ENCODE measurements at regions of chr12 and their contacts with region 1.

Region 1: GRCh38 chr12:12803186-12803585 is 10.0 kb upstream of the DDX47 start:
- DNase-seq: peak; percentile 81
- ATAC-seq: peak; percentile 87
- H3K4me3 Mint-ChIP-seq: peak overlapping the region; percentile 2
- H3K27ac Mint-ChIP-seq: peak overlapping the region; percentile 74
- H3K4me1 Mint-ChIP-seq: peaks cover 50% of the 10 kb centered on the region
- H3K27me3 Mint-ChIP-seq: no peaks in the 10 kb centered on the region

Region 2: DNA sequence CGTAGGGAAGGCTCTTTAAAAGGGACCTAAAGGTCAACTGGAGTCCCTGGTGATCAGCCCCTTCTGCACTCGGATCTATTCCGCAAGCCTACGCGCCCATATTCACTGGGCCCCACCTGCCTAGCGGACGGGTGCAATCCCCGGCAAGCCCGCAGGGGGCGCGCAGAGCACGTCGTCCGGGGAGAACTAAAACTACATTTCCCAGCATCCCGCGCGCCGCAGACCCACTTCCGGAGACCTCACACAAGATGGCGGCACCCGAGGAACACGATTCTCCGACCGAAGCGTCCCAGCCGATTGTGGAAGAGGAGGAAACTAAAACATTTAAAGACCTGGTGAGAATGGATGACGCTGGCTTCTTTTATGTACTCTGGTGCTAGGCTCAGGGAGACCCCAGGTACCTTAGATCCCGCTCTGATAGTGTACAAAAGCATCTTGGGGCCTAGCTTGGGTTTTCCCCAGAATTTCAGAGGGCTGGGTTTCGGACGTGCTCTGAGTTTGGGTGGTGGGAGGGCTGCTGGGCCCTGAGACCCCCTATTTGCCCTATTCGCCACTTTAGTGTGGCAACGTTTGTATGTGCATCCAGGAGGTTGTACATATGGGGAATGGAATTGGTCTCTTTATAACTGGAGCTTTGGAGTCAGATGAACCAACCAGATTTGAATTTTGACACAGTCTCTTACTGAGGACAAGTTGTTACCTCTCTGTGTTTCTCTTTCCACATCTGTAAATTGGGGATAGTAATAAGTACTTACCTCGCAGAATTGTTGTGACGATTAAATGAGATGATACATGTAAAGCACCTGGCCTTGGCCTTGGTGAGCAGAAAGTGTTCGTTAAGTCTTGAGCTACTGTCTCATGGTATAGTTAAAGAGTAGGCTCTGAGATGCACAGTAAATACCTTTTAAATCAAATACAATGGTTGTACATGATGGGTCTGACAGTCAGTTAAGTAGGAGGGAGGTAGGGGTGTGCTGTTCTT is 10.2 kb after region 1 on chr12 and contains the start of gene DDX47:
- CTCF ChIA-PET with region 1: interaction called, 22 read pairs
- DNase-seq: peak; percentile 97
- ATAC-seq: peak; percentile 89
- H3K4me3 Mint-ChIP-seq: peak within 1 kb of the TSS; percentile 91
- H3K27ac Mint-ChIP-seq: peak within 1 kb of the TSS; percentile 86
- H3K4me1 Mint-ChIP-seq: peaks cover 78% of the 10 kb centered on the region
- H3K27me3 Mint-ChIP-seq: no peaks in the 10 kb centered on the region
- total RNA-seq, gene DDX47: 56.0 to 68.0 TPM

Measured in activated CD8-positive, alpha-beta memory T cell treated with anti-CD3 and anti-CD28 coated beads, Interleukin-2, amount 10 ng/mL, durations not matched to agents 7 days and 5 days (primary cell).